ENCODE measurements at regions of chr7 and their contacts with region 1.

Region 1: DNA sequence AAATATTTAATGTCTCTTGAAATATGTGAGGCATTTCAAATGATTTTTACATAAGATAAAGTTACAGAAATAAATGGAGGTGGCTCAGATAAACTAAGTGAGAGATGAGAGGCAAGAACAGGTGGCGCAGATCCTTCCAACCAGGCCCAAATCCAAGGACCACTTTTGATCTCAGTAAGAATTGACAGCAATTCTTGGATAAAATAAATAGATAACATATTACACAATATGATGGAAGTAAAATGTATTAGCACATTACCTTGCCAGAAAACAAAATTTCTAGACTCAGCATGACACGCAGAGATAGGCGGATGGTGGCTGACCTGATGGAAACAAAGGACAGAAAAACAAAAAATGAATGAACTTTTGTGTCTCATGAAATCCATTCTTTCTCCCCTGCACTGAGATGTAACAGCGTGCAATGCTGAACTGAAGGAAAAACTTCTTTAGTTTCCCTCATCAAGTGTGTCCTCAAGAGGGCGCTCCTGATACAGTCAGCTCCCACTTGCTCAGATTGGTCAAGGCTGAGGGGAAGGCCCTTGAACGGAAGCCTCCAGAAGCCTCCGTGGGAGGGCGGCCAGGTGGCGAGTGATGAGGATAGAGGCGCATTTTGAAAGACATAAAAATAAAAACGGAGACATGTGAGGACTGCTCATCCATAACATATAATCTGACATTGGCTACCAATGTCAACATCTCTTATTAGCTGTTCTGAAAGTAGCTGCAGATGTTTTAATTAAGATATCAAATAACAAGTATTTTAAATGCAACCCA is 62.8 kb upstream of the GSDME start:
- DNase-seq: peak; percentile 80
- ATAC-seq: peak; percentile 99
- H3K4me3 Mint-ChIP-seq: no peak overlapping the region
- H3K27ac Mint-ChIP-seq: no peak overlapping the region
- H3K4me1 Mint-ChIP-seq: peaks cover 9% of the 10 kb centered on the region
- H3K27me3 Mint-ChIP-seq: no peaks in the 10 kb centered on the region
- CTCF ChIP-seq: peak; percentile 71; the same call in 1 of the 2 replicates

Region 2: DNA sequence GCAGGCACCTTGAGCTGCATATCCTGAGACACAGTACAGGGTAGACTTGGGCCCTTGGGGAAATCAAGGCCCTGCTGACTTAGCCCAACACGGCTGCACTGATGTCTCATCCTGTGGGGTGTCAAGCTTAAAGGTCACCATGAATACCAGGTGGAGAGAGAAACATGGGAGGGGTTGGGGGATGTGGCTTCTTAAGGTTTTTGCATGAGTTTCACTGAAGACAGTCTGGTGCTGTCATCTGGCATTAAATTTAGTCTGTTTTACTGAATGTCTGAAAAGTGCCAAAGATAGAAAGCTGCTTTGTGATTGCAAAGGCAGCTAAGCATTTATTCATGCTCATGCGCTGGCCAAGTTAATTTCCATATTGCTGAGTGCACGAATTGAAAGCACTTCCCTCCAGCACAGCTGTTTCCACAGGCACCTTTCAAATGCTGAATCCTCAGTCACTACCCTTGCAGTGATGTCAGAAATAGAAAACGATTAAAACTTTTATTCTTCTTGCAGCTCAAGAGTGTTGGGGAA is 57.7 kb after region 1 on chr7:
- CTCF ChIA-PET with region 1: interaction called, 18 read pairs
- POLR2A ChIA-PET with region 1: no interaction called
- DNase-seq: no peak
- ATAC-seq: peak; percentile 43
- H3K4me3 Mint-ChIP-seq: peak overlapping the region; percentile 41
- H3K27ac Mint-ChIP-seq: peak overlapping the region; percentile 86
- H3K4me1 Mint-ChIP-seq: peaks cover 76% of the 10 kb centered on the region
- H3K27me3 Mint-ChIP-seq: no peaks in the 10 kb centered on the region
- CTCF ChIP-seq: no peak